ENCODE measurements at regions of chr3 and their contacts with region 1.

Region 1: DNA sequence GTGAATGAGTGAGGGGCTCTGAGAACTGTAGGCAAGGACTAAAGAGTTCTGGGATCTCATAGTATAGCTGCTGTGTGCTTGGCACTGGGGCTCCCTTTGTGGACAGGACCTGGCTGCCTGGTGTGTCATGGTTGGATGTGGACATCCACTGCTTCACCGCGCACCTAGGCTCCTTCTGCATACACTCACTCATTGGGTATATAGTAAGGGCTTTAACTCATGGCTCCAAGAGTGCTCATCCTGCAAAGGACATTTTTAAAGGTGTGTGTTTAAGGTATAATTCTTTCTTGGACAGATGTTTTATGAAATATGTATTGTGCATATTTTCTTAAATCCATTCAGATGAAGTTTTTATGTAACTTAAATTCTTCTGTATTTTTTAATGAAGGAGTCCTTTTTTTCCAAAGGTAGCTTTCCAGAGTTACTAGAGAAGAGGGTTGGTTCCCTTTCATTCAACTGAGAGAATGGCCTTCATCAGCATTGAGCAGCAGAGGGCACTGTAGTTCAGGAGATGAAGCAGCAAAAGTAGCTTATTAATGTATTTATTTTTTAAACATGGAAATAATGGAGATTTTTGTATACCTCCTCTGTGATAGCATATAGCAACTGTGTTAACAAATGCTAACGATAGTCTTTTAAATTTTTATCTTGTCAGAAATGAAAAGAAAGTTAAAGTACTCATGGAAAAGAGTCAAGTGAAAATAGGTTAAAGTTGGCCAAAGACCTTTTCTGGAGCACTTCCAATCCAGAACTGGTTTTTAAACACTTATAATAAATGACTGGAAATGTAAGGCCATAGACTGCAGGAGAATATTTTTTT is 25.2 kb downstream of the OXNAD1 start:
- DNase-seq: peak; percentile 81
- ATAC-seq: peak; percentile 12
- H3K4me3 Mint-ChIP-seq: peak overlapping the region; percentile 93
- H3K27ac Mint-ChIP-seq: peak overlapping the region; percentile 98
- H3K4me1 Mint-ChIP-seq: peaks cover 76% of the 10 kb centered on the region
- H3K27me3 Mint-ChIP-seq: no peaks in the 10 kb centered on the region
- CTCF ChIP-seq: peak; percentile 93

Region 2: GRCh38 chr3:16264708-16265454 is 25.3 kb before region 1 on chr3 and contains the starts of genes DPH3 and OXNAD1:
- CTCF ChIA-PET with region 1: interaction called, 138 read pairs
- POLR2A ChIA-PET with region 1: interaction called, 7 read pairs
- intact Hi-C with region 1: no loop called
- DNase-seq: peak; percentile 99
- ATAC-seq: peak; percentile 98
- H3K4me3 Mint-ChIP-seq: peak within 1 kb of the TSS; percentile 92
- H3K27ac Mint-ChIP-seq: peak within 1 kb of the TSS; percentile 98
- H3K4me1 Mint-ChIP-seq: peaks cover 30% of the 10 kb centered on the region
- H3K27me3 Mint-ChIP-seq: no peaks in the 10 kb centered on the region
- CTCF ChIP-seq: no peak
- total RNA-seq, gene DPH3: 18.2 to 19.9 TPM
- total RNA-seq, gene OXNAD1: 37.0 to 38.8 TPM

Region 3: GRCh38 chr3:16300881-16301359 is 10.7 kb after region 1 on chr3:
- CTCF ChIA-PET with region 1: interaction called, 120 read pairs
- POLR2A ChIA-PET with region 1: interaction called, 86 read pairs
- intact Hi-C with region 1: no loop called
- DNase-seq: peak; percentile 69
- ATAC-seq: peak; percentile 64
- H3K4me3 Mint-ChIP-seq: peak overlapping the region; percentile 73
- H3K27ac Mint-ChIP-seq: peak overlapping the region; percentile 95
- H3K4me1 Mint-ChIP-seq: peaks cover 94% of the 10 kb centered on the region
- H3K27me3 Mint-ChIP-seq: no peaks in the 10 kb centered on the region
- CTCF ChIP-seq: no peak

Region 4: DNA sequence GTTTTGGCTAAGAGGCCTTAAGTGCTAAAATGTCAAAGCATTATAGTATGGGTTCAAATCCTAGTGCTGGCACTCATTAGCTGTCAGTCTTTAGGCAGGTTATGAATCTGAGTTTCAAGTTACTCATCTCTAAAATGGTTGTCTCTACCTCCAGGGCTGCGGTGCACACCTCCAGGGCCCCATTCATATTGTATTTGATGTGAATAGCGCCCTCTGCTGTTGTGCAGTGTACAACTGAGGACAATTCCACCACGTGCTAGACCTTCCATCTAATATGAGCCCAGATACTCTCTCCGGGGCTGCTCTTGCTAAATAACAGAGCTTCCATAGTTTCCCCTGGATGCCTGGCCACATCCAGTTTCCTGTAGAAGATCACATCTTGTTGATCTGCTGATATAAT is 29.1 kb after region 1 on chr3:
- CTCF ChIA-PET with region 1: interaction called, 274 read pairs
- POLR2A ChIA-PET with region 1: interaction called, 32 read pairs
- intact Hi-C with region 1: loop called (anchors 1 kb)
- DNase-seq: peak; percentile 97
- ATAC-seq: peak; percentile 92
- H3K4me3 Mint-ChIP-seq: peak overlapping the region; percentile 21
- H3K27ac Mint-ChIP-seq: peak overlapping the region; percentile 96
- H3K4me1 Mint-ChIP-seq: peaks cover 78% of the 10 kb centered on the region
- H3K27me3 Mint-ChIP-seq: no peaks in the 10 kb centered on the region
- CTCF ChIP-seq: peak; percentile 69

Region 5: DNA sequence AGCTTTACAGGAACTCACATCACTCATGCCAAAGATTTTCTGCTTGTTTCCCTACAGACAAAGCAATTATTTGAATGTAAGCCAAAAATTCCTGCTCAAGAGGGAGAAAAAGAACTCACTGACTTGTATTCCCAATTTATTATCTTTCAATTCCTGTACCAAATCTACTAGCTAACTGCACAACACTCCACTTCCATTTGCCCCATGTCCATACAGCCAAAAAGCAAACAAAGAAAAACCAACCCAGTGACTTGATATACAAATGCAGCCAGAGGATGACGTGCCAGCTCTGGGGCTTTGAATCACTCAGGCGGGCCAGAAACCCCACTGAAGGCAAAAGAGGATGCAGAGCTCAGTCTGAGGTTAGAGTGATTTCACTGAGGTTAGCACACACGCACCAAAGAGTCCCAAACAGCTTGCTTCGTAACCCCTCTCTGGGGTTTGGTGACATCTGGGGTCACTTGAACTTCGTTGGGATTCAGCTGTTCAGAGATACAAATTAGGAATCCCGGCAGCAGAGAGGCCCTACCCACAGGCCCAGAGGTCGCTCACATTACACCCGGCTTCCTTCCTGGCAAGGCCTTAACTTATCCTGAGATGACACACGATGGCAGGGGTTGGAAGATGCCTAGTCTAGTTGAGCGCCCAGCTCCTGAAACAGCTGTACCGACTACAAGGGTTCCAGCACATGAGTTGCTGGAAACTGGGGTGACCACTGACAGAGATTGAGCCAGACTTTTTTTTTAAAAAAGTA is 221.6 kb after region 1 on chr3:
- CTCF ChIA-PET with region 1: interaction called, 5 read pairs
- POLR2A ChIA-PET with region 1: interaction called, 11 read pairs
- intact Hi-C with region 1: loop called (anchors 5 kb)
- DNase-seq: peak; percentile 95
- ATAC-seq: peak; percentile 69
- H3K4me3 Mint-ChIP-seq: peak overlapping the region; percentile 98
- H3K27ac Mint-ChIP-seq: peak overlapping the region; percentile 90
- H3K4me1 Mint-ChIP-seq: peaks cover 67% of the 10 kb centered on the region
- H3K27me3 Mint-ChIP-seq: no peaks in the 10 kb centered on the region
- CTCF ChIP-seq: no peak

Region 6: GRCh38 chr3:16550676-16551341 is 260.6 kb after region 1 on chr3:
- CTCF ChIA-PET with region 1: interaction called, 13 read pairs
- POLR2A ChIA-PET with region 1: no interaction called
- intact Hi-C with region 1: loop called (anchors 1 kb)
- DNase-seq: peak; percentile 87
- ATAC-seq: peak; percentile 100
- H3K4me3 Mint-ChIP-seq: no peak overlapping the region
- H3K27ac Mint-ChIP-seq: peak overlapping the region; percentile 95
- H3K4me1 Mint-ChIP-seq: peaks cover 23% of the 10 kb centered on the region
- H3K27me3 Mint-ChIP-seq: peaks cover 5% of the 10 kb centered on the region
- CTCF ChIP-seq: peak; percentile 94

Region 7: DNA sequence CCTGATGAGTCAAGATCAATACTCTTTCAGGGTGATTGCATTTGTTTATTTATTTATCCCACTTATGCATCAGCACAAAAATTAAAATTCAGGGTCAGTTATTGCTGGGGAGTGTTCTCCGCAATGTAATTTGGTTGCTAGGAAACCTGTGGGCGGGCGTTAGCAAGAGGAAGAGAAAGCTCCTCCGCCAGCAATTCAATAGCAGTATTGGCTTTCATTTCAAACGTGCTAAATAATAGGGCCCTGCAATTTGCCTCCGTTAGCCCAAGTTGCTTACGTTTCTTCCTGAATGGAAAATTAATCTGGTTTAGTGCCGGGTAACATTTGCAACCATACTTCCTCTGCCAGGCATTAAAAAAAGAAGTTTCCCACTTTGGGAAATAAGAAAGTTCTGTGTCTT is 559.0 kb after region 1 on chr3:
- CTCF ChIA-PET with region 1: no interaction called
- POLR2A ChIA-PET with region 1: no interaction called
- intact Hi-C with region 1: no loop called
- DNase-seq: peak; percentile 87
- ATAC-seq: peak; percentile 85
- H3K4me3 Mint-ChIP-seq: peak overlapping the region; percentile 65
- H3K27ac Mint-ChIP-seq: peak overlapping the region; percentile 75
- H3K4me1 Mint-ChIP-seq: peaks cover 44% of the 10 kb centered on the region
- H3K27me3 Mint-ChIP-seq: no peaks in the 10 kb centered on the region
- CTCF ChIP-seq: no peak

Measured in activated CD8-positive, alpha-beta T cell treated with anti-CD3 and anti-CD28 coated beads for 36 hours (primary cell).